ENCODE measurements at regions of chr12 and their contacts with region 1.

Region 1: GRCh38 chr12:105072888-105073488 is 11.3 kb downstream of the ALDH1L2 start:
- DNase-seq: peak; percentile 75
- H3K4me3 ChIP-seq: peak overlapping the region; percentile 17
- H3K27ac ChIP-seq: peak overlapping the region; percentile 56
- H3K4me1 ChIP-seq: peaks cover 29% of the 10 kb centered on the region
- CTCF ChIP-seq: no peak

Region 2: DNA sequence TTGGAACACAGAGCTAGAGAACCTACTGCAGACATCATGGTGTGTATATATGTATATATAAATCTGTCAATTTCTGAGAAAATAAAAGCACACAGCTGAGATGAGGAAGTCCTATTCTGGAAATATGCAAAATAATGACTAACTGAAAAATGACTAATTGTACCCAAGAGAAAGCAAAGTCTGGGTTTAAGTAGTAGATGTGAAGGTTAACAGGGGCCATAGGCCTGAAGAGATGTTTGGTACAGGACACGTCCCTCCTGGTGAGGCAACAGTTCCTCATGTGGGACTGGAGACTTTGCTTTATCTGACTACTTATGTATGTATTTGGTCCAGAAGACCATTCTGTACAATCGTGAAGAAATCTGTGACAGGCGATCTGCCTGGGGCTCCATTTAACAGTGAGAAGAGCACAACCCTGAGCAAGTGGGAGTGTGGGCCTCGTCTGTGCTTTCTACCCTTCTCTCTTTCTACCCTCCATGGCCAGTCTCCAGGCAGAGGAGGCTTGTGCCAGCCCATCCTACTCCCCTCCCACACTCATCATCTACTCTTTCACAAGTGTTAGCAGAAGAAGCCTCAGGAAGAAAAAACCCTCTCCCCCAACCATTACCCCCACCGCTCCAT is 182.4 kb before region 1 on chr12:
- CTCF ChIA-PET with region 1: no interaction called
- POLR2A ChIA-PET with region 1: no interaction called
- intact Hi-C with region 1: no loop called
- DNase-seq: peak; percentile 27
- H3K4me3 ChIP-seq: peak overlapping the region; percentile 10
- H3K27ac ChIP-seq: peak overlapping the region; percentile 32
- H3K4me1 ChIP-seq: peaks cover 22% of the 10 kb centered on the region
- CTCF ChIP-seq: no peak

Region 3: DNA sequence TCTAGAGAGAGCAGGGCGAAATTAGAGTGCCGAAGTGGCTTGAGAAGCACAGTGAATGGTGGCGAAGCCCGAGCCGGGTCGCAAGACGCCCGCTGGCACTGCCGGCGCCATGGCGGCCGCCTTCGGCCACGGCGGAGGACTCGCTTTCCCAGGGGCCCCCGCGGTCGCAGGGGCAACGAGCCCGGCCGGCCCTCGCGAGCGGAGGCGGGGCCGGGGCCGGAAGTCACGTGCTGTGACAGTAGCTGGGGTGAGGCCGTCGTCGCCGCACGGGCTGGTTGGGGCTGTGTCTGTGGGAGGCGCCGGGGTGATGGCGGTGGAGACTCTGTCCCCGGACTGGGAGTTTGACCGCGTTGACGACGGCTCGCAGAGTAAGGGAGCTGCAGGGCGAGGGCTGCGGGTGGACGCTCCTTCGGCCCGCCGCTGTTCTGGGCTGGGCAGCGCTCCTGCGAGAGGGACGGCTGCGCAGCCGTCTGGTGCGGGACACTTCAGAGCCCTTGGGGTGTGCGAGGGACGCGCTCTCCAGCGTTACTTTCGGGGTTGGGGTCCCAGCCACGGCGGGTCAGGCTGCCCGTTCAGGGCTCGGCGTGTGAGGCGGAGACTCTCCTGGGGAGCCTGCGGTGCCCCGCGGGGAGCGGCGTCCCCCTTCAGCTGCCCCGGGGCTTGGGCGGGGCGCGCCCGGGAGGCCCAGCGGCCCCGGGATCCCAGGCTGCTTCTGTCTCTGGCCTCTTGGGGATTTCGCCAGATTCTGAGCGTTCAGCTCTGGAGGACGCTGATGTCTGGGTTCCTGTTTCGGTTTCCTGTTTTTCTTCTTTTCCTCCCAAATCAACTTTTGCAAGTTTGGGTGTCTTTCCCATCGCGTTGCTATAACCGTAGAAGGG is 34.7 kb after region 1 on chr12 and contains the start of gene WASHC4:
- CTCF ChIA-PET with region 1: no interaction called
- POLR2A ChIA-PET with region 1: interaction called, 19 read pairs
- intact Hi-C with region 1: no loop called
- DNase-seq: peak; percentile 95
- H3K4me3 ChIP-seq: peak within 1 kb of the TSS; percentile 99
- H3K27ac ChIP-seq: peak within 1 kb of the TSS; percentile 96
- H3K4me1 ChIP-seq: peaks cover 36% of the 10 kb centered on the region
- CTCF ChIP-seq: no peak
- total RNA-seq, gene WASHC4: 54.8 and 63.6 TPM in 2 replicates

Measured in OCI-LY7 (cell line).